ENCODE measurements at regions of chr10 and their contacts with region 1.

Region 1: DNA sequence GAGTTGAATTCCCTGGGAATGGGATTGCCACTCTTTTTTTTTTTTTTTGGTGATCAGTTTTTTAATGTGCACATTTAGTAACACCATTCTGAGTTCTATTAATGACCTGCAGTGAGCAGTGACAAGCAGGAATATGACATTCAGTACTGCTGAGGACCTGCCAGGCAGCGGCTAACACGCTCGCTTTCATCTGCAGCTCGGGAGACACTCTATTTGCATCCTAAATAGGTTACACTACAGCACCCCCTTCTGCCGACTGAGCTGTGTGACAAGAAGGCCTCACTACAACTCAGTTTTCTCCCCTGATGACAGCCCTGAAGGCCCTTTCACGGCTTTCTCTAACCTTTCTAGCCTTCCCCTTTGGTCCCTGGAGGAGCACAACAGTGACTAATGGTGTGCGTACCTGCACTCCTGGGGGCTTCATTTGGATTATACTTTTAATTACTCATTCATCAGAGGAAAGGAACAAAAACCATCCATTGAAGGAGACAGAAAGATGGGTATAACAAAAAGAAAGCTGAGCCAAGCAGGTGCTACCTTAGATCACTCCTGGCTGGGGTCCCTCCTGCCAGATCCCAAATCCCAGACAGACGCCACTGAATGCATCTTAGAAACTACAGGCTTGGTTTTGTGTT is 872.4 kb downstream of the LRMDA start:
- DNase-seq: peak; percentile 84 to 85
- H3K4me3 ChIP-seq: no peak overlapping the region
- H3K4me3 Mint-ChIP-seq: peak overlapping the region; percentile 26
- H3K27ac Mint-ChIP-seq: peak overlapping the region; percentile 86
- H3K4me1 ChIP-seq: peaks cover 62% of the 10 kb centered on the region
- H3K4me1 Mint-ChIP-seq: peaks cover 52% of the 10 kb centered on the region
- H3K27me3 ChIP-seq: no peaks in the 10 kb centered on the region
- H3K27me3 Mint-ChIP-seq: no peaks in the 10 kb centered on the region
- CTCF ChIP-seq: peak; percentile 56 to 72

Region 2: GRCh38 chr10:76036111-76036940 is 267.5 kb before region 1 on chr10:
- CTCF ChIA-PET with region 1: interaction called, 6 read pairs
- POLR2A ChIA-PET with region 1: interaction called, 6 read pairs
- intact Hi-C with region 1: loop called (anchors 5 kb)
- DNase-seq: peak; percentile 56 to 66
- H3K4me3 ChIP-seq: no peak overlapping the region
- H3K4me3 Mint-ChIP-seq: no peak overlapping the region
- H3K27ac Mint-ChIP-seq: no peak overlapping the region
- H3K4me1 ChIP-seq: peaks cover 14% of the 10 kb centered on the region
- H3K4me1 Mint-ChIP-seq: peaks cover 21% of the 10 kb centered on the region
- H3K27me3 ChIP-seq: no peaks in the 10 kb centered on the region
- H3K27me3 Mint-ChIP-seq: no peaks in the 10 kb centered on the region
- CTCF ChIP-seq: peak; percentile 65 to 66

Region 3: DNA sequence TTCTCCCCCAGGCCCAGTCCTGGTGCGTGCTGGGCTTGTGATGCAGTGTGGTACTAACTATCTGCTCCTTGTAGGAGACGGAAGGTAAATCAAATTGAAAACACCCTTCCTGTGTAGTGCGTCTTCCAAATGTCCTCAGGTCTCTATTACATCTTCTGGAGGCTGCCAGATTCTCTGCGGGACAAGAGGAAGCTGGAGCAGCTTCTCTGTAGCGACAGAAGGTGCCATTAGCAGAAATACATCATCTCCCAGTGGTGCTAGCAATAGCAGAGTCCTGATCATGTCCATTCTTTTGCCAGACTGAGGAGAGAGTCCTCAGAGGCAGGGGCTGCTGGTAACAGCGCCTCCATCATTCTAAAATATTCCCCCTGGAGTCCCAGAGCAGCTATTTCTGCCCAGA is 197.2 kb before region 1 on chr10:
- CTCF ChIA-PET with region 1: interaction called, 3 read pairs
- POLR2A ChIA-PET with region 1: no interaction called
- intact Hi-C with region 1: loop called (anchors 2 kb)
- DNase-seq: no peak
- H3K4me3 ChIP-seq: no peak overlapping the region
- H3K4me3 Mint-ChIP-seq: no peak overlapping the region
- H3K27ac Mint-ChIP-seq: no peak overlapping the region
- H3K4me1 ChIP-seq: peaks cover 10% of the 10 kb centered on the region
- H3K4me1 Mint-ChIP-seq: peaks cover 21% of the 10 kb centered on the region
- H3K27me3 ChIP-seq: no peaks in the 10 kb centered on the region
- H3K27me3 Mint-ChIP-seq: no peaks in the 10 kb centered on the region
- CTCF ChIP-seq: no peak

Region 4: GRCh38 chr10:76150139-76150875 is 153.5 kb before region 1 on chr10:
- CTCF ChIA-PET with region 1: interaction called, 5 read pairs
- POLR2A ChIA-PET with region 1: interaction called, 8 read pairs
- intact Hi-C with region 1: loop called (anchors 1 kb)
- DNase-seq: peak; percentile 93 to 95
- H3K4me3 ChIP-seq: peak overlapping the region; percentile 17; the same call in 1 of the 2 replicates
- H3K4me3 Mint-ChIP-seq: peak overlapping the region; percentile 68
- H3K27ac Mint-ChIP-seq: peak overlapping the region; percentile 99
- H3K4me1 ChIP-seq: peaks cover 26% of the 10 kb centered on the region
- H3K4me1 Mint-ChIP-seq: peaks cover 28% of the 10 kb centered on the region
- H3K27me3 ChIP-seq: no peaks in the 10 kb centered on the region
- H3K27me3 Mint-ChIP-seq: no peaks in the 10 kb centered on the region
- CTCF ChIP-seq: no peak

Region 5: DNA sequence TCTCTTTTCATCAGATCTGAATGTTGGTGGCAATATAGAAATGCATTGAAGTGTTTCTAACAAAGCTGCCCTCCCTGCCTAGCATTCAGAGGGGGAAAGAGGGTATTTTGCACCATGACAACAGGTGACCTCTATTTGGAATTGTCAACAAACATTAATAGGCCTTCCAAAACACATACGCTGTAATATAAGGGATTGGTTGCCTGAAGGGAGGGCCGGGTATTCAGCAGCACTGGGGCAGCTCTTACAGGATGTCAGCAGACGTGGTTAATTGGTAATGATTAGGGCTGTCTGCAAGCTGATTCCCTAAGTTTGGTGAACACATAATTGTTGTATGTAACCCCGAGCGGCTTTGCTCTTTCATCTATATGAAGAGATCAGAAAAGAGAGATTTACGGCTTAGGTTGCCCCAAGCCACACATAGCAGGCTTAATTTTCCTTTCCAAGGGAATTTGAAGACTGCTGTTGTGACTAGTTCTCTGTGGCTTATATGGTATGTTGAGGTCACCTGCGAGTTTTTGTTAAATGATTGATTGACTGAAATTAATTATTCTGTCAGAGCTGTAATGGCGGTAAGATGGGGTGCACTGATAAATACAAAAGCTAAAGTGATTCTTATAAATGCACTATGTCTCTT is 113.0 kb before region 1 on chr10:
- CTCF ChIA-PET with region 1: interaction called, 14 read pairs
- POLR2A ChIA-PET with region 1: no interaction called
- intact Hi-C with region 1: loop called (anchors 1 kb)
- DNase-seq: peak; percentile 72 to 78
- H3K4me3 ChIP-seq: no peak overlapping the region
- H3K4me3 Mint-ChIP-seq: peak overlapping the region; percentile 53
- H3K27ac Mint-ChIP-seq: peak overlapping the region; percentile 92
- H3K4me1 ChIP-seq: peaks cover 47% of the 10 kb centered on the region
- H3K4me1 Mint-ChIP-seq: peaks cover 26% of the 10 kb centered on the region
- H3K27me3 ChIP-seq: no peaks in the 10 kb centered on the region
- H3K27me3 Mint-ChIP-seq: no peaks in the 10 kb centered on the region
- CTCF ChIP-seq: no peak

Region 6: GRCh38 chr10:76270464-76270863 is 33.3 kb before region 1 on chr10:
- CTCF ChIA-PET with region 1: no interaction called
- POLR2A ChIA-PET with region 1: no interaction called
- intact Hi-C with region 1: no loop called
- DNase-seq: no peak
- H3K4me3 ChIP-seq: no peak overlapping the region
- H3K4me3 Mint-ChIP-seq: no peak overlapping the region
- H3K27ac Mint-ChIP-seq: no peak overlapping the region
- H3K4me1 ChIP-seq: no peaks in the 10 kb centered on the region
- H3K4me1 Mint-ChIP-seq: no peaks in the 10 kb centered on the region
- H3K27me3 ChIP-seq: no peaks in the 10 kb centered on the region
- H3K27me3 Mint-ChIP-seq: no peaks in the 10 kb centered on the region
- CTCF ChIP-seq: no peak

Region 7: DNA sequence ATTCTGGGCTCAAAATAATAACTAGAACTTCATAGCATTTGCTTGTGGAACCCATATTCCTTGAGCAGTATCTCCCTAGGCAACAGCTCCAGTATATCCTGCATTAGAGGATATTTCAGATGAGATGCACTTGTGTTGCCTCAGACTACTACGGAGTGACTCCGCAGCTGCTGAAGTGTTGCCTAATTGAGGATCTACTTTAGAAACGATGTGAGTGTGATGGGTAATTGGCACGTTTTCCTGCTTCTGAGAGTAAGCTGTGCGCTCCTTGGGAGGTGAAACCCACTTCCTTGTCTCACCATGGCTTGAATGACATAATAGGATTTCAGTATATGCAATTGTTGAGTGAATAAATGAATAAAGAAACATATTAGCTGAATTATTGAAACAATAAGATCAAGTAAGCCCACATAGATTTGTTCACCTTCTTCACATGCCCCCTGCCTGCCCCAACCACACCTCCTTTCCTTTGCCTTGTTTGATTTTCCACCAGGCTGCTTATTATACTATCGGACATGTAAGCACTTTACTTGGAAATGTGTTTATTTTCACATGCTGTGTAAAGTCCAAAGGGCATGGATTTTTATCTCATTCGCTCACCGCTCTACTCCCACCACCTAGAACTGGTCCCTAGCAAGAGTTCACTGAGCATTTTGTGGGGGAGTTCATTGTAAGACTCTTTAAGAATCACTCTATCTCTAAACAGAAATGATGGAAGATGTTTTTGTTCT is 1030.0 kb after region 1 on chr10:
- CTCF ChIA-PET with region 1: no interaction called
- POLR2A ChIA-PET with region 1: no interaction called
- intact Hi-C with region 1: no loop called
- DNase-seq: peak; percentile 73 to 79
- H3K4me3 ChIP-seq: no peak overlapping the region
- H3K4me3 Mint-ChIP-seq: peak overlapping the region; percentile 58
- H3K27ac Mint-ChIP-seq: peak overlapping the region; percentile 91
- H3K4me1 ChIP-seq: peaks cover 51% of the 10 kb centered on the region
- H3K4me1 Mint-ChIP-seq: peaks cover 57% of the 10 kb centered on the region
- H3K27me3 ChIP-seq: no peaks in the 10 kb centered on the region
- H3K27me3 Mint-ChIP-seq: no peaks in the 10 kb centered on the region
- CTCF ChIP-seq: no peak